ENCODE measurements at regions of chr11 and their contacts with region 1.

Region 1: DNA sequence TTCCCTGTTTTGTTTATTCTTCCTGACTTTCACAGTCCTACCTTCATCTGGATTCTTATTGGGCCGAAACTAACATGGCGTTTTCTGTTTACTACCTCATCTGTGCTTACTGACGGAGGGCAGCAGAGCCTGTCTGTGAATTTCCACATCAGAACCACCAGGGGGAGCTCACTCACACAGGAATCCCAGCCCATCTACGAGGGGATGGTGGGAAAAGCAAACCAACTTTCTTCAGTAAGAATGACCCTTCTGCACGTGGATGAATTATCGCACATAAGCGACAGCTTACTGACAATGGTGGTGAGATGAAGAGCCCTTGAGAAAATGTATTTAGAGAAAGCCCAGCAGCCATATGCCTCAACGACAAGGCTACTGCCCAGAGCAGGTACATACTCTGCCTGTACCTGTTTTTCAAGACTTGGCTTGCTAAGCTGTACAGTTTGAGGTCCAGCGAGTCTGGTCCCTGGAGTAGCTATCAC is 42.5 kb downstream of the LARGE2 start:
- DNase-seq: peak; percentile 69
- H3K4me3 Mint-ChIP-seq: no peak overlapping the region
- H3K27ac Mint-ChIP-seq: no peak overlapping the region
- H3K4me1 Mint-ChIP-seq: no peaks in the 10 kb centered on the region
- H3K27me3 Mint-ChIP-seq: no peaks in the 10 kb centered on the region

Region 2: GRCh38 chr11:45982656-45983470 is 17.9 kb after region 1 on chr11:
- CTCF ChIA-PET with region 1: interaction called, 33 read pairs
- POLR2A ChIA-PET with region 1: interaction called, 3 read pairs
- intact Hi-C with region 1: no loop called
- DNase-seq: peak; percentile 75
- H3K4me3 Mint-ChIP-seq: no peak overlapping the region
- H3K27ac Mint-ChIP-seq: peak overlapping the region; percentile 62
- H3K4me1 Mint-ChIP-seq: peaks cover 35% of the 10 kb centered on the region
- H3K27me3 Mint-ChIP-seq: no peaks in the 10 kb centered on the region

Region 3: GRCh38 chr11:46006418-46007070 is 41.6 kb after region 1 on chr11:
- CTCF ChIA-PET with region 1: interaction called, 153 read pairs
- POLR2A ChIA-PET with region 1: interaction called, 3 read pairs
- intact Hi-C with region 1: loop called (anchors 1 kb)
- DNase-seq: no peak
- H3K4me3 Mint-ChIP-seq: no peak overlapping the region
- H3K27ac Mint-ChIP-seq: no peak overlapping the region
- H3K4me1 Mint-ChIP-seq: peaks cover 2% of the 10 kb centered on the region
- H3K27me3 Mint-ChIP-seq: no peaks in the 10 kb centered on the region

Region 4: GRCh38 chr11:46142561-46142960 is 177.6 kb after region 1 on chr11:
- CTCF ChIA-PET with region 1: no interaction called
- POLR2A ChIA-PET with region 1: no interaction called
- intact Hi-C with region 1: no loop called
- DNase-seq: no peak
- H3K4me3 Mint-ChIP-seq: no peak overlapping the region
- H3K27ac Mint-ChIP-seq: no peak overlapping the region
- H3K4me1 Mint-ChIP-seq: no peaks in the 10 kb centered on the region
- H3K27me3 Mint-ChIP-seq: peaks cover 5% of the 10 kb centered on the region

Region 5: GRCh38 chr11:46295312-46296058 is 330.5 kb after region 1 on chr11:
- CTCF ChIA-PET with region 1: no interaction called
- POLR2A ChIA-PET with region 1: no interaction called
- intact Hi-C with region 1: no loop called
- DNase-seq: peak; percentile 77
- H3K4me3 Mint-ChIP-seq: peak overlapping the region; percentile 70
- H3K27ac Mint-ChIP-seq: no peak overlapping the region
- H3K4me1 Mint-ChIP-seq: peaks cover 7% of the 10 kb centered on the region
- H3K27me3 Mint-ChIP-seq: peaks cover 15% of the 10 kb centered on the region

Region 6: DNA sequence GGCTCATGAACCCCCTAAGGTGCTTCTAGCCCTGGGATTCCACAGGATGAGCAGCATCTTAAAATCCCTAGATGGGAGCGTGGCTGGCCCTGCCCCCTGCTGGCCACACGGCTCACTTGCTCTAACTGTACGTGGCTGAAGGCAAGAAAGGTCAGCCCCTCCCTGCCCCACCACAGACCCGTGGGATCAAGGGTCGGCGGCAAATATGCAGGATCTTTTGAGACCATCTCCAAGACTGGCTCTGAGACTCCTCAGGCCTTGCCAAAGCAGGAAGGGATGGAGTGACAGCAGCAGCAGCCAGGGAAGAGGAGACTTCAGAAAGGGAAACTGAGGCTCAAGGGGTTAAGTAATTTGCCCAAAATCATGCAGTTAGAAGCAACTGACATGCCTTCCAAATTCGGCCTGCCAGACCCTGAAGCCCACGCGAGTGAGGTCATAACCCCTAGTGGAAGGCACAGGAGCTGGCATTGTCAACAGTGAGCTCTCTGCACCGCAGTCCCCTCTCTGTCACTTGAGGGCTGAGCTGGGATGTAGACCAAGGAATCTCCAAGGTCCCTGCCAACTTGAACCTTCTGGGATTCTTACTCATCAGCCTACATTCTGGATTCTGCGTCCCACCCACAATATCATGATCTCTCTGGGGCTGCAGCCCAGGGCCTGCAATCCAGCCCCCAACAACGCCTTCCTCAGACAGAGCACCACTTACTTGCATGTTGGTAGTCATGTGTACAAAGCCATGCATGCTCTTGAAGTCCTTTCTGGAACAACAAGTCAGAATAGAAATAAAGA is 343.9 kb after region 1 on chr11:
- CTCF ChIA-PET with region 1: interaction called, 19 read pairs
- POLR2A ChIA-PET with region 1: no interaction called
- intact Hi-C with region 1: loop called (anchors 2 kb)
- DNase-seq: peak; percentile 82
- H3K4me3 Mint-ChIP-seq: no peak overlapping the region
- H3K27ac Mint-ChIP-seq: no peak overlapping the region
- H3K4me1 Mint-ChIP-seq: peaks cover 5% of the 10 kb centered on the region
- H3K27me3 Mint-ChIP-seq: no peaks in the 10 kb centered on the region

Measured in activated CD4-positive, alpha-beta memory T cell treated with anti-CD3 and anti-CD28 coated beads for 36 hours (primary cell).